Mammary epithelial cell (primary cell): ENCODE measurements at regions of chr4 and their contacts with region 1.

Region 1: GRCh38 chr4:5378002-5378401 is 326.7 kb downstream of the STK32B start:
- DNase-seq: no peak
- H3K4me3 ChIP-seq: no peak overlapping the region
- H3K27ac ChIP-seq: no peak overlapping the region
- H3K4me1 ChIP-seq: no peaks in the 10 kb centered on the region
- H3K27me3 ChIP-seq: no peaks in the 10 kb centered on the region
- CTCF ChIP-seq: peak; percentile 28 to 49

Region 2: DNA sequence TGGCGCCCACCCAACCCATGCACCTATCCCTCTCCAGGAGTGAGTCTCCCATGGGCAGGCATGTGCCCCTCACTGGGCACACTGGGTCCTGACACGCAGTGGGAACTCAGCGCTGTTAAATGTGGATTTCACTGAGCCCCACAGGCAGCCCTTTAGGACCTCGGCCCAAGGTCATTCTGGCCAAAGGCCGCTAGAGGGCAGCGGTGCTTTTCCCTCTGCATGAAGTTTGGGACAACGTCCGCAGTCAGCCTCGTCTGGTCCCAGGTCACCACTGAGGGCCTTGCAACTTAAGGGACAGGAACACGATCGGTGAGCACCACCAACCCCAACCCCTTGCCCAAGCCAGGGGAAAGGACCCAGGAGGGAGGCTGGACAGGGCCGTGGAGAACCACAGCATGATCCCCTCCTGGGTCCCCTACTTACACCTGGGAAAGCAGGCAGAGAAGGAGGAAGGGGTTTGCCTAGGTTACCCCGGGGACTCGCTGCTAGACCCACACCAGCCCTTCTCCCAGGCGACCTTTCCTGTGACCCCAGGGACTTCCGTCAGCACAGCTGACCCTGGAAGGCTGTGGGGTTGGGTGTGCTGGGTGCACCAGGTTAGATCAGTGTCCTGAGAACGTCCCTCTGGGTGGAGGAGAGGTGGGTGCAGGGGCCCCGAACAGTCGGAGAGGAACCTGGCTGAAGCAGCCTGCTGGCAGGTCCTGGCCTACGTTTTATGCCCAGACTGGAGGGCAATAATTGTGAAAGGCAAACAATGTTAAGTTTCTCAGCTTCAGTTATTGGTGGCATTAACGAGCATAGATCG is 382.7 kb before region 1 on chr4:
- CTCF ChIA-PET with region 1: no interaction called
- dilution Hi-C with region 1: no loop called
- in situ Hi-C with region 1: no loop called
- intact Hi-C with region 1: loop called (anchors 5 kb)
- DNase-seq: peak; percentile 42
- H3K4me3 ChIP-seq: no peak overlapping the region
- H3K27ac ChIP-seq: no peak overlapping the region
- H3K4me1 ChIP-seq: no peaks in the 10 kb centered on the region
- H3K27me3 ChIP-seq: peaks cover 2% of the 10 kb centered on the region
- CTCF ChIP-seq: peak; percentile 89 to 95

Region 3: GRCh38 chr4:5050520-5051277 is 327.3 kb before region 1 on chr4:
- CTCF ChIA-PET with region 1: no interaction called
- dilution Hi-C with region 1: no loop called
- in situ Hi-C with region 1: no loop called
- intact Hi-C with region 1: loop called (anchors 1 kb)
- DNase-seq: peak; percentile 63
- H3K4me3 ChIP-seq: peak overlapping the region; percentile 46 to 59 (median 53)
- H3K27ac ChIP-seq: no peak overlapping the region
- H3K4me1 ChIP-seq: peaks cover 12% of the 10 kb centered on the region
- H3K27me3 ChIP-seq: no peaks in the 10 kb centered on the region
- CTCF ChIP-seq: peak; percentile 59 to 81